WTC11 (cell line): ENCODE measurements at regions of chr4 and their contacts with region 1.

Region 1: GRCh38 chr4:47122592-47123291 is 91.4 kb downstream of the GABRB1 start:
- DNase-seq: peak; percentile 75
- ATAC-seq: peak; percentile 88
- H3K4me3 Mint-ChIP-seq: no peak overlapping the region
- H3K27ac Mint-ChIP-seq: no peak overlapping the region
- H3K4me1 Mint-ChIP-seq: no peaks in the 10 kb centered on the region
- H3K27me3 Mint-ChIP-seq: no peaks in the 10 kb centered on the region
- CTCF ChIP-seq: peak; percentile 73

Region 2: DNA sequence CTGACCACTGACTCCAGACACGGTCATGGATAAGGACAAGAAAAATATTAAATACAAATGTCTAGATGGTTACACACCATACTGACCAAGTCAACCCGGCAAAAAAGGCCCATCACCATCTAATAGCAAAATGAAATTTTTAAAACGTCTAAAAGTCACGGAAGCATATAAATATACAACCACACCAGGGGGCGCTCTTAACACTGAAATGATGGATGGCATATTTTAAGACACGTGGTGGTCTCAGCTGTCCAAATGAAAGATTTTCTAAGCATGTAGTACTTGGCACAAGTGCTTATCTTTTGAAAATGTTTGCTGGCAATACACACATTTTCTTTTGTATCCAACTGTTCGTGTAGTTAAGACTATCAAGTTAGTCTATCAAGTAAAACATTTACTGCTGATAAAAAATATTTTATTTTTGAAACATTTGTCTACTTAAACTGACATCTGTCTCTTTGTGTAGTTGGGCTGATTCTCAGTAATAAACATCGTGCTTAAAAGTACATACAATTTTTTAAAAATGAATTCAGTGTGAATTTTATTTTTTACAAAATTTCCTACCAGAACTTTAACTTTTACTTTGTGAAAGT is 278.3 kb before region 1 on chr4:
- CTCF ChIA-PET with region 1: interaction called, 10 read pairs
- POLR2A ChIA-PET with region 1: no interaction called
- DNase-seq: peak; percentile 34
- ATAC-seq: 0 out of 2 replicates have a peak, but pooled peaks have one; percentile 16
- H3K4me3 Mint-ChIP-seq: no peak overlapping the region
- H3K27ac Mint-ChIP-seq: no peak overlapping the region
- H3K4me1 Mint-ChIP-seq: peaks cover 3% of the 10 kb centered on the region; the same call in 1 of the 2 replicates
- H3K27me3 Mint-ChIP-seq: no peaks in the 10 kb centered on the region
- CTCF ChIP-seq: peak; percentile 53

Region 3: GRCh38 chr4:46931981-46932380 is 190.8 kb before region 1 on chr4:
- CTCF ChIA-PET with region 1: interaction called, 12 read pairs
- POLR2A ChIA-PET with region 1: no interaction called
- DNase-seq: peak; percentile 49
- ATAC-seq: peak; percentile 97
- H3K4me3 Mint-ChIP-seq: no peak overlapping the region
- H3K27ac Mint-ChIP-seq: no peak overlapping the region
- H3K4me1 Mint-ChIP-seq: no peaks in the 10 kb centered on the region
- H3K27me3 Mint-ChIP-seq: no peaks in the 10 kb centered on the region
- CTCF ChIP-seq: peak; percentile 40; the same call in 1 of the 2 replicates

Region 4: DNA sequence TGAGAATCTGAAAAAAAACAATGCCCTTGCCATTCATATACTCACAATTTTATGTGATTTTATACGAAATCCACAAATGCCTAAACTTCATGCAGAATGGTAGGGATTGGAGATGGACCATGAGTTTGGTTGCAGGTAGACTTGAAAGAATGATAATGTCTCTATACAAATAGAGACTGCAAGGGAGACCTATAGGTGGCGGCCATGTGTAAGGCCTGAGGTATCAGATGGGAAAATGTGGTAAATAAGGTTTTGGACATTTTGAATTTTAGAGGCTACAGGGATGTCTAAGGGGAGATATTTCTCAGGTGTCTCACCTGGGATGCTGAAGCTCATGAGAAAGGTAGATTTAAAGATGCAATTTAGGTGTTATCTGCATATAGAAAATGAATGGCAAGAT is 13.4 kb before region 1 on chr4:
- CTCF ChIA-PET with region 1: interaction called, 10 read pairs
- POLR2A ChIA-PET with region 1: no interaction called
- DNase-seq: no peak
- ATAC-seq: peak; percentile 57
- H3K4me3 Mint-ChIP-seq: no peak overlapping the region
- H3K27ac Mint-ChIP-seq: no peak overlapping the region
- H3K4me1 Mint-ChIP-seq: no peaks in the 10 kb centered on the region
- H3K27me3 Mint-ChIP-seq: 0 out of 2 replicates have a peak, but pooled peaks cover 4% of the 10 kb centered on the region
- CTCF ChIP-seq: no peak

Region 5: DNA sequence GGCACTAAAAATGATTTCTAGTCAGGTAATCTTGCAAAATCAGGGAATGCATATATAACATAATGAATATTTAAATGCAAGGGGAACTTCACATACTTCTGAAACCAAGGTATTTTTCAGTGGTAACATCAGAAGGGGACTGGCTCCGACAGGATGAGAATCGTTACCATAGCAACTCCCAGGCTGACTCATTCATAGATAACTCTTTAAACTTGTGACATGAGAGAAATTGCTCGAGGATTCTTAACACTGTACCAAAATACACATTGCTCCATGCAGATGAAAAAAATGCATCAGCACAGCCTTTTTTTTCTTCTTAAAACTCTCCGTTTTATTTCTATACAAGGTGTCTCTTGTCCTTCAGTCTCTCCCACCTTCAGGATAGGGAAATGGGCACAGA is 22.9 kb after region 1 on chr4:
- CTCF ChIA-PET with region 1: interaction called, 12 read pairs
- POLR2A ChIA-PET with region 1: no interaction called
- DNase-seq: no peak
- ATAC-seq: no peak
- H3K4me3 Mint-ChIP-seq: no peak overlapping the region
- H3K27ac Mint-ChIP-seq: no peak overlapping the region
- H3K4me1 Mint-ChIP-seq: no peaks in the 10 kb centered on the region
- H3K27me3 Mint-ChIP-seq: no peaks in the 10 kb centered on the region
- CTCF ChIP-seq: no peak

Region 6: DNA sequence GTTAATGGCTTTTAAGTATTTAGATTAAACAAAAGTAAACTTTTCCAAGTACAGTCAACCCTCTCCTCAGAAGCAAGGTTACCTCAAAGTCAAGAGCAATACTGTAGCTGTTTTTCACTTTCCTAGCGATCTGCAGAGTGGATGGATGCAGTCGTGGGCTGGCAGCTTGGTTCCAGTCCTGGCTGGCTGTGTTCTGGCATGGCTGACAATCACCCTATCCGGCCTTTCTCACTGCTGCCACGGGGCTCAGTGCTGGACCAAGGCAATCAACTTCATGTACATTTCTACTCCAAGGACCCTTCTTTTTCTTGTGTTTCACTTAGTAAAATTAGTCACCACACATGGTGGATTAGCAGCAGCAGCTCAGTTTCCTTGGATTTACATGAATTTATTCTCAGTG is 116.9 kb after region 1 on chr4:
- CTCF ChIA-PET with region 1: no interaction called
- POLR2A ChIA-PET with region 1: no interaction called
- DNase-seq: no peak
- ATAC-seq: peak; percentile 65
- H3K4me3 Mint-ChIP-seq: no peak overlapping the region
- H3K27ac Mint-ChIP-seq: no peak overlapping the region
- H3K4me1 Mint-ChIP-seq: no peaks in the 10 kb centered on the region
- H3K27me3 Mint-ChIP-seq: no peaks in the 10 kb centered on the region; the same call in 1 of the 2 replicates
- CTCF ChIP-seq: no peak

Region 7: GRCh38 chr4:47326032-47326431 is 203.3 kb after region 1 on chr4:
- CTCF ChIA-PET with region 1: no interaction called
- POLR2A ChIA-PET with region 1: no interaction called
- DNase-seq: no peak
- ATAC-seq: no peak
- H3K4me3 Mint-ChIP-seq: no peak overlapping the region
- H3K27ac Mint-ChIP-seq: no peak overlapping the region
- H3K4me1 Mint-ChIP-seq: no peaks in the 10 kb centered on the region
- H3K27me3 Mint-ChIP-seq: no peaks in the 10 kb centered on the region
- CTCF ChIP-seq: no peak